Calu3 (cell line): ENCODE measurements at regions of chr5 and their contacts with region 1.

Region 1: GRCh38 chr5:176415952-176416924 is at the start of gene CLTB:
- DNase-seq: peak; percentile 94
- H3K4me3 Mint-ChIP-seq: peak within 1 kb of the TSS; percentile 79
- H3K27ac Mint-ChIP-seq: peak within 1 kb of the TSS; percentile 78
- H3K4me1 Mint-ChIP-seq: peaks cover 51% of the 10 kb centered on the region
- H3K27me3 Mint-ChIP-seq: no peaks in the 10 kb centered on the region
- CTCF ChIP-seq: peak; percentile 73
- total RNA-seq, gene CLTB: 104 and 116 TPM in 2 replicates

Region 2: DNA sequence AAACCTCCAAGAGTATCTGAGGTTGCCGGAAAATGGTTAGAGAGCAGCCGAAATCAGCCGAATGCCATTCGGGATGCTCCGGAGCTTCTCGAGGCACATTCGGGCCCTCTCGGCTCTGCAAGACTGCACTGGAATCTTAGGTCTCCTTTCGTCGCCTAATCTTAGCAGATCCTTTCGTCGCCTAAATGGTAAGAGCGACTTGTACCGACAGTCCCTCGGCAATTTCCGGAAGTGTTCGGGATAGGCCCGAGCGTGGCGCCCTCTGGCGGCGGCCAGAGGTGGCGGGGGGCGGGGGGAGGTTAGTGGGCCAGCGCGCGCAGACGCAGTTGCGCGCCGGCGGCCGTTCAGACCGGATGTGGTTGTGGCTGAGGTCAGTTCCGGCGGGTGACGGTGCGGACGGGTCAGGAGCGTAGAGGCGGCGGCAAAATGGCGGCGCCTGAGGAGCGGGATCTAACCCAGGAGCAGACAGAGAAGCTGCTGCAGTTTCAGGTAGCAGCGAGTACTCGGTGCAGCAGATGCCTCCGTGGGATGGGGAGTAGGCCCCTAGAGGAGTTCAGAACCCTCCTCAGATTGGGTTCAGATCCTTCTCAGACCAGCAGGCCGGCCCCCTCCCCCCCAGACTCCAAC is 31.9 kb after region 1 on chr5 and contains the start of gene FAF2:
- CTCF ChIA-PET with region 1: interaction called, 31 read pairs
- intact Hi-C with region 1: loop called (anchors 2 kb)
- DNase-seq: peak; percentile 99
- H3K4me3 Mint-ChIP-seq: peak within 1 kb of the TSS; percentile 83
- H3K27ac Mint-ChIP-seq: peak within 1 kb of the TSS; percentile 89
- H3K4me1 Mint-ChIP-seq: peaks cover 26% of the 10 kb centered on the region
- H3K27me3 Mint-ChIP-seq: no peaks in the 10 kb centered on the region
- CTCF ChIP-seq: peak; percentile 98
- total RNA-seq, gene FAF2: 68.9 and 73.6 TPM in 2 replicates

Region 3: DNA sequence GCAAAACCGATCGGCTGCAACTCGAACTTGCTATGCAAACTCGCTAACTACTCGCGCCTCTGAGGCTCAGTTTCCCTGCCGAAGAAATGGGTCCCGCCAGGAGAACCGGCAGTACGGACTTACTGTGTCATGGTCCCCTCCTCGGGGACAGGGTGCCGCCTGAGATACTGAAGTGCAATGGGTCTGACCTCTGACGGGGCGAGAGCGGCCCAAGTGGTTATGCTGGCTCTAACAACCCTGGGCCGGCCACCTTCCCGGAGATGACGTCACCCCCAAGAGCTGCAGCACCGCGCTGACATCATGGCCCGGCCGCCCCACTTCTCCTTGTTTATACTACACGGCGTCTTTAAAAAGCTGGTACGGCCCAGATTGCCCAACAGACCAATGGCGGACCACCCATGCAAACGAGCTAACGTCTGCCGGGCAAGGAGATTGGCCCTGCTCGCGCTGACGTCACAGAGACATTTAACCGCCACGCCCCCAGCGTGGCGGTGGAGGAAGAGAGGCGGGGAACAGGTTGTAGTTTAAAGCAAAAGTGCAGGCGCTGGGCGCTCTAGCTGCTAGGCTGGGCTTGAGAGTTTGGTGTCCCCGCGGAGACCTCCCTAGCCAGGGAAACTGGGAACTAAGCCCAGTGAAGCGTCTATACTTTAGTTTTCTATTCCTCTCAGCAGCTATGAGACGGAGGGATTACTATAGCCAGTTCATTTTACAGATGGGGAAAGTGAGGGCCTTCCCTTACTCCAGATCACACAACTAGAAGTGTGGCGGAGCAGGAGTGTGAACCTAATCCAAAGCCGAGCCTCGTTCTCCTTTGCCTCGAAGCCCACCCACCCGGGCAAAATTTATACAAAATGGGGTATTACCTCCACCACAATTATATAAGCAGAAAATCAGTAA is 121.6 kb after region 1 on chr5:
- CTCF ChIA-PET with region 1: interaction called, 17 read pairs
- intact Hi-C with region 1: loop called (anchors 5 kb)
- DNase-seq: peak; percentile 98
- H3K4me3 Mint-ChIP-seq: peak overlapping the region; percentile 96
- H3K27ac Mint-ChIP-seq: peak overlapping the region; percentile 97
- H3K4me1 Mint-ChIP-seq: peaks cover 81% of the 10 kb centered on the region
- H3K27me3 Mint-ChIP-seq: no peaks in the 10 kb centered on the region
- CTCF ChIP-seq: no peak

Region 4: GRCh38 chr5:176609724-176610434 is 193.6 kb after region 1 on chr5 and contains the start of gene GPRIN1:
- CTCF ChIA-PET with region 1: no interaction called
- intact Hi-C with region 1: loop called (anchors 10 kb)
- DNase-seq: peak; percentile 90
- H3K4me3 Mint-ChIP-seq: peak within 1 kb of the TSS; percentile 84
- H3K27ac Mint-ChIP-seq: peak within 1 kb of the TSS; percentile 29
- H3K4me1 Mint-ChIP-seq: peaks cover 19% of the 10 kb centered on the region
- H3K27me3 Mint-ChIP-seq: peaks cover 23% of the 10 kb centered on the region
- CTCF ChIP-seq: peak; percentile 50
- total RNA-seq, gene GPRIN1: 11.5 and 12.6 TPM in 2 replicates

Region 5: GRCh38 chr5:176863041-176863764 is 447.0 kb after region 1 on chr5:
- CTCF ChIA-PET with region 1: no interaction called
- intact Hi-C with region 1: no loop called
- DNase-seq: no peak
- H3K4me3 Mint-ChIP-seq: no peak overlapping the region
- H3K27ac Mint-ChIP-seq: no peak overlapping the region
- H3K4me1 Mint-ChIP-seq: no peaks in the 10 kb centered on the region
- H3K27me3 Mint-ChIP-seq: peaks cover 8% of the 10 kb centered on the region
- CTCF ChIP-seq: no peak